ENCODE measurements at regions of chr14 and their contacts with region 1.

Region 1: GRCh38 chr14:91286530-91286937 is 42.0 kb upstream of the GPR68 start:
- DNase-seq: peak; percentile 87
- H3K4me3 ChIP-seq: no peak overlapping the region
- H3K27ac ChIP-seq: no peak overlapping the region
- H3K4me1 ChIP-seq: peaks cover 11% of the 10 kb centered on the region
- H3K27me3 ChIP-seq: no peaks in the 10 kb centered on the region
- CTCF ChIP-seq: peak; percentile 90 to 96 (median 95)
- POLR2A ChIP-seq: no peak

Region 2: DNA sequence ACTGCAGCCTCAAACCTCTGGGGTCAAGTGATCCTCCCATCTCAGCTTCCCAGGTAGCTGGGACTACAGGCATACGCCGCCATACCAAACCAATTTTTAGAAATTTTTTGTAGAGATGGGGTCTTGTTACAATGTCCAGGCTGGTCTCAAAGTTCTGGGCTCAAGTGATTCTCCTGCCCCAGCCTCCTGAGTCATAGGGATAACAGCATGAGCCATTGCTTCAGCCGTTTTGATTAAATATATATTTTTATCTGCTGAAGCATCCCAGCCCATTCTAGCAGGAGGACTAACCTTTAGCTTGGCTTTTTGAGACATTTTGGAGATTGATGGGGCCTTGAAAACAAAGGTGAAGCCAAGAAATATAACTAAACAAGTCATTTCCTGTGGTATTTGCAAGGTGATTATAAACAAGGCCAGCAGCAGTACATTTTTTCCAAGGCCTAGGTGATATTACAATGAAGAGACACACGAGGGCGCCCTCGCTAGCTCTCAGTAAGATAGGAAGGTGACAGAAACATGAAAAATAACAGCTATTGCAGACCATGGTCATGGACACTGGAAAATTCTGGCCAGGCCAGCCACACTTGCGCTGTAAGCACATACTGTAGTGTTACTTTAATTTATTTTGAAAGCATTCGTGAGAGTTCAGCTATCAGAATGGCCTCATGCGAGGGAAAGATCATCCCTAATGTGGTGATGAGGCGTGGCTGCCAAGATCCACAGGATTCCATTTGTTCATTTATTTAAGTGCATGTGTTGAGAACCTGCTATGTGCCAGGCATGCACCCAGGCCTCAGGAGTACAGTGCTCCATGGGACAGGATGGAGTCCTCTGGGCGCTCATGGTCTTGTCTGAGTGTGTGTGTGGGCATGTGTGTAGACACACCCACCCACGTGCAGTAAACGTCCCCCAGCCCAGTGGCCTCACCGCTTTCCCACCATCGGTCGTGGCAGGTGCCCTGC is 109.2 kb before region 1 on chr14:
- intact Hi-C with region 1: loop called (anchors 5 kb)
- DNase-seq: peak; percentile 70
- H3K4me3 ChIP-seq: no peak overlapping the region
- H3K27ac ChIP-seq: no peak overlapping the region
- H3K4me1 ChIP-seq: no peaks in the 10 kb centered on the region
- H3K27me3 ChIP-seq: no peaks in the 10 kb centered on the region
- CTCF ChIP-seq: peak; percentile 31 to 72 (median 60)
- POLR2A ChIP-seq: no peak

Region 3: GRCh38 chr14:91396959-91397815 is 110.7 kb after region 1 on chr14:
- intact Hi-C with region 1: no loop called
- DNase-seq: no peak
- H3K4me3 ChIP-seq: no peak overlapping the region
- H3K27ac ChIP-seq: no peak overlapping the region
- H3K4me1 ChIP-seq: peaks cover 8% of the 10 kb centered on the region
- H3K27me3 ChIP-seq: no peaks in the 10 kb centered on the region
- CTCF ChIP-seq: no peak
- POLR2A ChIP-seq: no peak